Activated naive CD4-positive, alpha-beta T cell treated with anti-CD3 and anti-CD28 coated beads for 36 hours (primary cell): ENCODE measurements at regions of chr7 and their contacts with region 1.

Region 1: GRCh38 chr7:23013715-23014649 is at the start of gene HYCC1:
- DNase-seq: peak; percentile 99
- H3K4me3 Mint-ChIP-seq: peak within 1 kb of the TSS; percentile 89
- H3K27ac Mint-ChIP-seq: peak within 1 kb of the TSS; percentile 78
- H3K4me1 Mint-ChIP-seq: peaks cover 7% of the 10 kb centered on the region
- H3K27me3 Mint-ChIP-seq: peaks cover 3% of the 10 kb centered on the region
- total RNA-seq, gene HYCC1: 19.5 to 19.7 TPM

Region 2: GRCh38 chr7:21945454-21946227 is 1068.3 kb before region 1 on chr7 and contains the start of gene CDCA7L:
- CTCF ChIA-PET with region 1: no interaction called
- intact Hi-C with region 1: loop called (anchors 10 kb)
- DNase-seq: peak; percentile 85
- H3K4me3 Mint-ChIP-seq: peak within 1 kb of the TSS; percentile 86
- H3K27ac Mint-ChIP-seq: peak within 1 kb of the TSS; percentile 84
- H3K4me1 Mint-ChIP-seq: peaks cover 63% of the 10 kb centered on the region
- H3K27me3 Mint-ChIP-seq: no peaks in the 10 kb centered on the region
- total RNA-seq, gene CDCA7L: 101 to 103 TPM

Region 3: GRCh38 chr7:22697876-22698606 is 315.9 kb before region 1 on chr7:
- CTCF ChIA-PET with region 1: no interaction called
- intact Hi-C with region 1: loop called (anchors 5 kb)
- DNase-seq: peak; percentile 59
- H3K4me3 Mint-ChIP-seq: no peak overlapping the region
- H3K27ac Mint-ChIP-seq: peak overlapping the region; percentile 84
- H3K4me1 Mint-ChIP-seq: peaks cover 67% of the 10 kb centered on the region
- H3K27me3 Mint-ChIP-seq: no peaks in the 10 kb centered on the region

Region 4: GRCh38 chr7:22885797-22886261 is 128.2 kb before region 1 on chr7:
- CTCF ChIA-PET with region 1: no interaction called
- intact Hi-C with region 1: loop called (anchors 1 kb)
- DNase-seq: peak; percentile 88
- H3K4me3 Mint-ChIP-seq: peak overlapping the region; percentile 64
- H3K27ac Mint-ChIP-seq: peak overlapping the region; percentile 98
- H3K4me1 Mint-ChIP-seq: peaks cover 54% of the 10 kb centered on the region
- H3K27me3 Mint-ChIP-seq: no peaks in the 10 kb centered on the region

Region 5: GRCh38 chr7:23105644-23106056 is 91.7 kb after region 1 on chr7 and contains the start of gene KLHL7:
- CTCF ChIA-PET with region 1: no interaction called
- intact Hi-C with region 1: loop called (anchors 2 kb)
- DNase-seq: peak; percentile 98
- H3K4me3 Mint-ChIP-seq: peak within 1 kb of the TSS; percentile 93
- H3K27ac Mint-ChIP-seq: peak within 1 kb of the TSS; percentile 89
- H3K4me1 Mint-ChIP-seq: peaks cover 35% of the 10 kb centered on the region
- H3K27me3 Mint-ChIP-seq: no peaks in the 10 kb centered on the region
- total RNA-seq, gene KLHL7: 24.0 to 26.4 TPM

Region 6: DNA sequence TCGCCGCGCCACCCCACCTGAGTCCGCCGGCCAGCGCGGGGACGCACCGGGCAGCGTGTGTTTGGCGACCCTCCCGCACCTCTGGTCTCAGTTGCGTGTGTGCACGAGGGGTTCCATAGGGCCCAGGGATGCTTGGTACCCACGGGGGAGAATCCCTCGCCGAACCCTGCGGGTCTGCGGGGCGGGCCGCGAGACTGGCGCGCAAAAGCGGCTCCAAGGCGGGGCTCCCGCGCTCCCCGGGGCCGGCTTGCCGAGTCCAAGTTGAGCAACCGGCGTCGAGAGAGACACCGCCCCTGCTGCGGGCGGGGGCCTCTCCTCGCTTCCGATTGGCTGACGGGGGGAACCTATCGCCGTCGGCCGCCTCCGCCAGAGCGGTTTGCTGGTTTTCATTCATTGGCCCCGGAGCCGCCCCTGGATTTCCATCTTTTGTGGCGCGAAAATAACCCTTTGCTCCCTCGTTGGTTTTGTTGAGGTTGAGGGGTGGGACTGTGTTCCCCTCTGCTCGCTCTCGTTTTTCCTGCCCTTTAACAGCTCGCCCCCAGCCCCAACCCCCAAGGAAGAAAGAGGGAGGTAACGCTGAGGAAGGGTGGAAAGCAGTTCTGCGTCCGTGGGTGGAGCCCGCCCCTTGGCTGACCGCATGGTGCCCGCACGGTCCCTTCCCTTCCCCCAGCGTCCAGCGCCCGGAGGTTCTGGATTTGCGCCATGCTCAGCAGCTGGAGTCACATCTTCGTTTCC is 460.3 kb after region 1 on chr7:
- CTCF ChIA-PET with region 1: no interaction called
- intact Hi-C with region 1: loop called (anchors 10 kb)
- DNase-seq: peak; percentile 91
- H3K4me3 Mint-ChIP-seq: peak overlapping the region; percentile 76
- H3K27ac Mint-ChIP-seq: peak overlapping the region; percentile 30
- H3K4me1 Mint-ChIP-seq: peaks cover 22% of the 10 kb centered on the region
- H3K27me3 Mint-ChIP-seq: peaks cover 57% of the 10 kb centered on the region